Ascending aorta (tissue), 2 donors: ENCODE measurements at regions of chr5 and their contacts with region 1.

Region 1: GRCh38 chr5:148963664-148964063 is 99.2 kb downstream of the SH3TC2 start:
- DNase-seq: no peak
- H3K4me3 ChIP-seq: no peak overlapping the region
- H3K27ac ChIP-seq: no peak overlapping the region
- H3K4me1 ChIP-seq: peaks cover 5 to 17% of the 10 kb centered on the region in 2 donors
- H3K27me3 ChIP-seq: no peaks in the 10 kb centered on the region
- CTCF ChIP-seq: no peak

Region 2: GRCh38 chr5:147901555-147901954 is 1062.1 kb before region 1 on chr5:
- intact Hi-C with region 1: loop called (anchors 5 kb)
- DNase-seq: peak in 1 of 2 donors; percentile 73
- H3K4me3 ChIP-seq: no peak overlapping the region
- H3K27ac ChIP-seq: peak overlapping the region; percentile 78 to 95
- H3K4me1 ChIP-seq: peaks cover 17 to 40% of the 10 kb centered on the region in 2 donors
- H3K27me3 ChIP-seq: no peaks in the 10 kb centered on the region
- CTCF ChIP-seq: no peak

Region 3: DNA sequence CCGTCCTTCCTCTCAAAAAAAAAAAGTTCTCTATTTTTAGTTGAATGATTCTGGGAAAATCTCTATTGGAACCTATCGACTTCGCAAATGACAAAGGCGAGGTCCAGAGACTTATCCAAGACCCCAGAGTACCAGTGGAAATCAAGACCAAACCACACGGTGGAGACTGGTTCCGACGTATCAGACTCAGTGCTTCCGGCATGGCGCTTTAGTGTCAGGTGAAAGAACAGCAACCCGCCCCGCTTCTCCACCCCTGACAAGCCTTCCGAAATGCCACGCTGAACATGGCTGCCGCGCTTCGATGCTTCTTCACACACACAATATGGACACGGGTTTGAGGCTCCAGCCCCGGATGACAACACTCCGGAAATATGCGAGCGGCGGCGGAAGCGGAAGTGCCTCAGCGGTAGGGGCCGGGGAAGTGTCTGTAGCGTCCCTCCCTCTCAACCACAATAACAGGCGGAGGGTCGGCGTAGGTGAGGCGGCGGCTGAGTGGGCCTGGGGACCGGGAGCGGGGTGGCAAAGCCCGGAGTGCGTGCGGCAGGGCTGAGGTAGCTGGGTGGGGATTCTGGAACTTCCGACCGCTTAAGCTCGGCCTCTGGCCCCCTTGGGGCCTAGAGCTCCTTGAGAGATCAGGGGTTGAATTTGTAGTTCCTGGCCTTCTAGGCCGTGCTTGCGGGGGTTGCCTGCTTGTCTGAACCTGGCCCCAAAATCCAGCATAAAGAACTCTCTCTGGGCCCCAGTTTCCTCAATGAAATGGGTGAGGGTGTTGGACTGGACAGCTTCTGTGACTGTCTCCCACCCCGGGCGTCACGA is 579.9 kb before region 1 on chr5 and contains the start of gene FBXO38:
- intact Hi-C with region 1: loop called (anchors 5 kb)
- DNase-seq: peak; percentile 96 to 99
- H3K4me3 ChIP-seq: peak within 1 kb of the TSS; percentile 84 to 99
- H3K27ac ChIP-seq: peak within 1 kb of the TSS; percentile 85 to 94
- H3K4me1 ChIP-seq: peaks cover 6 to 22% of the 10 kb centered on the region in 2 donors
- H3K27me3 ChIP-seq: no peaks in the 10 kb centered on the region
- CTCF ChIP-seq: peak in 2 of 3 experiments; percentile 5 to 7
- total RNA-seq, gene FBXO38: 12.1 TPM

Region 4: DNA sequence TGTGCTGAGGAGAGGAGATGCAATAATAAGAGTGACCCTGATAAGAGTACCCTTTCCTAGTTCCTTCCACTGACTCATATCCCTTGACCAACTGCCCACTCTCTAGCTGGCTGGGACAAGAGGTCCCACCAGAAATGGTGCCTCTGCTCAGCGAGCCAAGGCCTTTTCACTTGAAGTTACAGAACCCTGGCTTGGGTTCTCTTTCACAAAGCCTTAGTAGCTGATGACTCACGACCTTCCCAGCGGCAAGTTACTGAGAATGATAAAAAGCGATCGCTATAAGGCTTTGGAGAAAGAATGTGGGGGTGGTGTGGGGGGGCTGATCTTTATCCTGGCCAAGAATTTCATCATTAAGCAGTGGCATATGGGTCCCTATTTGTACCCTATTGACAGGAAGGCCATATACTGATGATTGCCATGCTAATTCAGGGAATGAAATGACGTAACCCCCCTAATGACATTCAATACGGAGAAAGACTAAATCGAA is 489.6 kb before region 1 on chr5:
- intact Hi-C with region 1: loop called (anchors 10 kb)
- DNase-seq: peak; percentile 23 to 90
- H3K4me3 ChIP-seq: peak overlapping the region; percentile 14 to 28
- H3K27ac ChIP-seq: peak overlapping the region; percentile 76 to 77
- H3K4me1 ChIP-seq: peaks cover 0 to 4% of the 10 kb centered on the region in 2 donors
- H3K27me3 ChIP-seq: no peaks in the 10 kb centered on the region
- CTCF ChIP-seq: no peak

Region 5: GRCh38 chr5:148826053-148826738 is 137.5 kb before region 1 on chr5 and contains the start of gene ADRB2:
- intact Hi-C with region 1: loop called (anchors 1 kb)
- DNase-seq: peak; percentile 92 to 98
- H3K4me3 ChIP-seq: peak within 1 kb of the TSS; percentile 59 to 71
- H3K27ac ChIP-seq: peak within 1 kb of the TSS; percentile 77 to 85
- H3K4me1 ChIP-seq: peaks cover 0 to 11% of the 10 kb centered on the region in 2 donors
- H3K27me3 ChIP-seq: no peaks in the 10 kb centered on the region
- CTCF ChIP-seq: no peak
- total RNA-seq, gene ADRB2: 11.2 TPM

Region 6: GRCh38 chr5:148904440-148904839 is 59.2 kb before region 1 on chr5:
- intact Hi-C with region 1: loop called (anchors 5 kb)
- DNase-seq: peak; percentile 42 to 84
- H3K4me3 ChIP-seq: no peak overlapping the region
- H3K27ac ChIP-seq: peak overlapping the region; percentile 66 to 81
- H3K4me1 ChIP-seq: peaks cover 5 to 25% of the 10 kb centered on the region in 2 donors
- H3K27me3 ChIP-seq: no peaks in the 10 kb centered on the region
- CTCF ChIP-seq: no peak

Region 7: GRCh38 chr5:148998174-148998797 is 34.6 kb after region 1 on chr5:
- intact Hi-C with region 1: loop called (anchors 5 kb)
- DNase-seq: no peak
- H3K4me3 ChIP-seq: no peak overlapping the region
- H3K27ac ChIP-seq: no peak overlapping the region
- H3K4me1 ChIP-seq: peaks cover 0 to 3% of the 10 kb centered on the region in 2 donors
- H3K27me3 ChIP-seq: no peaks in the 10 kb centered on the region
- CTCF ChIP-seq: peak; percentile 62 to 70 (median 67)

Region 8: DNA sequence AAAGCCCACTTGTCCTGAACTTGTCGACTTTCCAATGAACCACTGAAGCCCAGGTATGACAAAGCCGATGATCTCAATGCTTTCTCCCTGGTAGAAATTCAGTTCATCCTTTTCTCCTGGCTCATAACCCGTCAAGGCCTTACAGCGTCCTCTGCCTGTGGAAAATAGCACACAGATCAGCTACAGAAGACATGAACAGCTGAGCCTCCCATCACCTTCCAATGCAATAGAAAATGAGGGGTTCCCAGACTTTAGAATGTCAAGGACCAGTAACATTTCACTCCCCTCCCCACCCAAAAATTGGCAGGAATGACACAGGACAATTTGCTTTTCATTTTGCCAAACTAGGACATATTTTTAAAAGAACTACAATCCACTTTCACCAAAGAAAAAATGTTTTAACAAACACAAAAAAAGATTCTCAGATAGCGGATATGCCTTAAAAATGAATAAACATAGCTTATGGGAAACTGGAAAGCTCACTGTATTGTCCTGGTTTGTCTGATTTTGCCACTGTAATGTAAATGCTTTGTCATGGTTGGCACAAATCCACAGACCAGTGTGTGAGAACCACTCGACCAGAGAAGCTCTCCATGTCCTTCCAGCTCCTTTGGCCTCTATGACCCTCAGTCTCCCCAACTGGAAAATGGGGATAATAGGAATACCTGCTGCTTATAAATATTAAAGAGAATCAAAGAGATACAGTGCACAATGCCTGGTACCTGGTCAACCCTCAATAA is 74.8 kb after region 1 on chr5:
- intact Hi-C with region 1: no loop called
- DNase-seq: no peak
- H3K4me3 ChIP-seq: no peak overlapping the region
- H3K27ac ChIP-seq: no peak overlapping the region
- H3K4me1 ChIP-seq: no peaks in the 10 kb centered on the region
- H3K27me3 ChIP-seq: no peaks in the 10 kb centered on the region
- CTCF ChIP-seq: no peak

Region 9: GRCh38 chr5:149581192-149581861 is 617.7 kb after region 1 on chr5 and contains the start of gene ARHGEF37:
- intact Hi-C with region 1: no loop called
- DNase-seq: peak; percentile 18 to 90
- H3K4me3 ChIP-seq: peak within 1 kb of the TSS; percentile 73 to 75
- H3K27ac ChIP-seq: peak within 1 kb of the TSS; percentile 72 to 84
- H3K4me1 ChIP-seq: peaks cover 14 to 15% of the 10 kb centered on the region in 2 donors
- H3K27me3 ChIP-seq: no peaks in the 10 kb centered on the region
- CTCF ChIP-seq: no peak
- total RNA-seq, gene ARHGEF37: 13.4 TPM